Naive thymus-derived CD8-positive, alpha-beta T cell (primary cell): ENCODE measurements at regions of chr9 and their contacts with region 1.

Region 1: DNA sequence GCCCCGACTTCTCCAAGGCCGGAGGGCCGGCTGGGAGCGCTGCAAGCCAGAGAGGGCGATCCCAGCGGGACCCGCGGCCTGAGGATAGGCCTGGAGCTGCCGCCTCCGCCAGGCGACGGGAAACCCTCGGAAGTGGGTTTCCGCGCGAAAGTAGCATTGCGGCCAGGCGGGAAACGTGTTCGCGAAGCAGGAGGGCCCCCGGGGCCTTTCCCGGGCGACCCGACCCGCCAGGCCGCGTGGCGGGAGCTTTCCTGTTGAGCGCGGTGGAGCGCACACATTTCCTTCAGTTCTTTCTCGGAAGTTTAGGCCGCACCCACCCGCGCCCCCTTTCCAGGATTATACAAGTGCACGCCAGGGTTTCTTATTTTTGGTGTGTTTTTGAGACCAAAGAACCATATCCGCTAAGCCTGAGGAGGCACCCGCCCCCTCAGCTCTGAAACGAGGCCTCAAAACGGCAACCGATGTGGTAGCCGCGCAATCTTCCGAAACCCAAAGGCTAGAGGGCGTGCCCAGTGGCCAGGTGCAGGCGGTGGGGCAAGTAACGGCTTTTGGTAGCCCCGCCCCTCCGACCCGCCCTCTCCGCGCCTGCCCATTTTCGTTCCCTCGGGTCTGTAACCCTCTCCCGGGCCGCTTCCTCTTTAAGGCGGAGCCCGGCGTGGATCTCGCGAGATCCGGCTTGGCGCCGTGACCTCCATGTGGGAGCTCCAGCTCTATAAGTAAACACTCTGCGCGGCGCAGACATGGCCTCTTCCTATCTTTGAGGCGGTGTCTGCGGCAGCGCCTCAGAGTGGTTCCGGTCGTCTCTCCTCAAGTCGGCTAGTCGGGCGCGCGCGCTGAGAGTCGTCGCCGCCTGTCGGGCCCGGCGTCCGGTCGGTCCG is at the start of gene UHRF2:
- DNase-seq: peak; percentile 92 to 100 (median 98)
- ATAC-seq: peak; percentile 86 to 91
- H3K4me3 Mint-ChIP-seq: peak within 1 kb of the TSS; percentile 84 to 95 (median 90)
- H3K27ac Mint-ChIP-seq: peak within 1 kb of the TSS; percentile 80 to 97 (median 96)
- H3K4me1 Mint-ChIP-seq: peaks cover 21 to 54% (median 35%) of the 10 kb centered on the region in 4 donors
- H3K27me3 Mint-ChIP-seq: no peaks in the 10 kb centered on the region
- polyA plus RNA-seq, gene UHRF2: 9.4 to 13.1 (median 10.6) TPM

Region 2: GRCh38 chr9:6328103-6328502 is 84.6 kb before region 1 on chr9 and contains the start of gene TPD52L3:
- POLR2A ChIA-PET with region 1: no interaction called
- DNase-seq: no peak
- ATAC-seq: no peak
- H3K4me3 Mint-ChIP-seq: no peak within 1 kb of the TSS
- H3K27ac Mint-ChIP-seq: no peak within 1 kb of the TSS
- H3K4me1 Mint-ChIP-seq: peaks cover 0 to 4% (median 0%) of the 10 kb centered on the region in 4 donors
- H3K27me3 Mint-ChIP-seq: peaks cover 7 to 40% (median 7%) of the 10 kb centered on the region in 5 donors
- polyA plus RNA-seq, gene TPD52L3: not detected

Region 3: GRCh38 chr9:6428940-6429889 is 16.5 kb after region 1 on chr9:
- POLR2A ChIA-PET with region 1: interaction called, 21 read pairs
- DNase-seq: peak in 2 of 10 donors; percentile 9 to 31
- ATAC-seq: peak; percentile 63 to 65
- H3K4me3 Mint-ChIP-seq: peak overlapping the region; percentile 4 to 76 (median 28)
- H3K27ac Mint-ChIP-seq: peak overlapping the region in 8 of 10 donors; percentile 2 to 89 (median 70)
- H3K4me1 Mint-ChIP-seq: peaks cover 28 to 89% (median 78%) of the 10 kb centered on the region in 4 donors
- H3K27me3 Mint-ChIP-seq: no peaks in the 10 kb centered on the region

Region 4: GRCh38 chr9:6681147-6681956 is 268.6 kb after region 1 on chr9:
- POLR2A ChIA-PET with region 1: interaction called, 23 read pairs
- DNase-seq: peak; percentile 82 to 96 (median 90)
- ATAC-seq: peak; percentile 88 to 89
- H3K4me3 Mint-ChIP-seq: peak overlapping the region; percentile 93 to 98 (median 94)
- H3K27ac Mint-ChIP-seq: peak overlapping the region; percentile 98 to 100 (median 99)
- H3K4me1 Mint-ChIP-seq: peaks cover 8 to 34% (median 19%) of the 10 kb centered on the region in 4 donors
- H3K27me3 Mint-ChIP-seq: no peaks in the 10 kb centered on the region

Region 5: GRCh38 chr9:6715755-6716643 is 303.3 kb after region 1 on chr9:
- POLR2A ChIA-PET with region 1: interaction called, 18 read pairs
- DNase-seq: peak; percentile 31 to 87 (median 53)
- ATAC-seq: peak; percentile 92
- H3K4me3 Mint-ChIP-seq: peak overlapping the region; percentile 83 to 93 (median 87)
- H3K27ac Mint-ChIP-seq: peak overlapping the region; percentile 85 to 94 (median 91)
- H3K4me1 Mint-ChIP-seq: peaks cover 5 to 11% (median 8%) of the 10 kb centered on the region in 4 donors
- H3K27me3 Mint-ChIP-seq: no peaks in the 10 kb centered on the region